Ascending aorta (tissue), 2 donors: ENCODE measurements at regions of chr2 and their contacts with region 1.

Region 1: GRCh38 chr2:36355151-36355889 is at the start of gene CRIM1:
- DNase-seq: peak; percentile 47 to 92
- H3K4me3 ChIP-seq: peak within 1 kb of the TSS; percentile 81
- H3K27ac ChIP-seq: peak within 1 kb of the TSS; percentile 94 to 97
- H3K4me1 ChIP-seq: peaks cover 2 to 18% of the 10 kb centered on the region in 2 donors
- H3K27me3 ChIP-seq: no peaks in the 10 kb centered on the region
- CTCF ChIP-seq: no peak
- total RNA-seq, gene CRIM1: 273 TPM

Region 2: GRCh38 chr2:36294290-36294689 is 61.0 kb before region 1 on chr2:
- intact Hi-C with region 1: no loop called
- DNase-seq: no peak
- H3K4me3 ChIP-seq: no peak overlapping the region
- H3K27ac ChIP-seq: no peak overlapping the region
- H3K4me1 ChIP-seq: no peaks in the 10 kb centered on the region
- H3K27me3 ChIP-seq: no peaks in the 10 kb centered on the region
- CTCF ChIP-seq: no peak

Region 3: GRCh38 chr2:36373149-36373926 is 18.0 kb after region 1 on chr2:
- intact Hi-C with region 1: loop called (anchors 2 kb)
- DNase-seq: no peak
- H3K4me3 ChIP-seq: peak overlapping the region in 1 of 2 donors; percentile 3
- H3K27ac ChIP-seq: peak overlapping the region; percentile 47 to 68
- H3K4me1 ChIP-seq: peaks cover 22 to 78% of the 10 kb centered on the region in 2 donors
- H3K27me3 ChIP-seq: no peaks in the 10 kb centered on the region
- CTCF ChIP-seq: no peak

Region 4: DNA sequence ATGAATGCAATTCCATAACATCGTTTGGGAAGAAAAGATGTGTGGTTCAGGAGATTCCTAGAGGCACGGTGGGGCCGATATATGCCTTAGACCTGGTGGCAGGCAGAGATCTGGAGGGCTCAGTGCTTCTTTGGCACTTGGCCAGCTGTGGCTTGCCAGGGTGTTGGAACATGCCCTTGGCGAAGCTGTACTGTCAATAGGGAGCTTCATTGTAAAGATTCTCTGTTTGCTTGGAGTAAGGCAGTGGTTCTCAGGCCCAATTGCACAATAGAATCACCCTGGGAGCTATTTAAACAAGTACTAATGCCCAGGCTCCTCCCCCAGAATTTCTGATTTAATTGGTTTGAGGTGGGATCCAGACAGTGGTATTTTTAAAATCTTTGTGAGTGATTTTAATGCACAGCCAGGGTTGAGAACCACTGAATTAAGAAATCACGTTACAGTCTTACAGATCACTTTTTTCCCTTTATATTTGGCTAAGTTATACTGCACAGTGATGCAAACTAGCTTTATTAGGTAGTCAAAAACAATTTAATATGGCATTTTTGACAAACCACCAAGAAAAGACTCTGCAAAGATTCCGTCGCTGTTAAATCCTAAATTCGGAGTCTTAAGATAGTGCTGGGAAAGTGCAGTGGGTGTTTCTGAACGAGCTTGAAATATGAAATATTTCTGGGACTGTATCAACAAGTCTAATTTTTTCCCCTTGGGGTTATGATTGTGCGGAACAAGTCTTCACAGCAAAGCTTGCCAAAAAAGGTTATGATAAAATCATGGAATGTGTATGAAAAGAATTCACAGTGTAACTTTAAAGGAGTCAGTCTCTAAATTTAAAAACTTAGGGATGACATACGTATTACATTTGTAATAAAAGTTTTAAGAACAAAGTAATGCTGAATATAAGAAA is 78.2 kb after region 1 on chr2:
- intact Hi-C with region 1: loop called (anchors 5 kb)
- DNase-seq: peak in 1 of 2 donors; percentile 83
- H3K4me3 ChIP-seq: peak overlapping the region in 1 of 2 donors; percentile 37
- H3K27ac ChIP-seq: peak overlapping the region; percentile 85 to 86
- H3K4me1 ChIP-seq: peaks cover 15 to 75% of the 10 kb centered on the region in 2 donors
- H3K27me3 ChIP-seq: no peaks in the 10 kb centered on the region
- CTCF ChIP-seq: no peak

Region 5: GRCh38 chr2:36478332-36478738 is 123.0 kb after region 1 on chr2:
- intact Hi-C with region 1: loop called (anchors 1 kb)
- DNase-seq: peak in 1 of 2 donors; percentile 82
- H3K4me3 ChIP-seq: no peak overlapping the region
- H3K27ac ChIP-seq: peak overlapping the region; percentile 68 to 70
- H3K4me1 ChIP-seq: peaks cover 3 to 39% of the 10 kb centered on the region in 2 donors
- H3K27me3 ChIP-seq: no peaks in the 10 kb centered on the region
- CTCF ChIP-seq: no peak

Region 6: GRCh38 chr2:36489293-36489692 is 134.0 kb after region 1 on chr2:
- intact Hi-C with region 1: no loop called
- DNase-seq: no peak
- H3K4me3 ChIP-seq: no peak overlapping the region
- H3K27ac ChIP-seq: peak overlapping the region; percentile 78 to 81
- H3K4me1 ChIP-seq: peaks cover 17 to 70% of the 10 kb centered on the region in 2 donors
- H3K27me3 ChIP-seq: no peaks in the 10 kb centered on the region
- CTCF ChIP-seq: no peak

Region 7: GRCh38 chr2:36597532-36598377 is 242.4 kb after region 1 on chr2 and contains the start of gene FEZ2:
- intact Hi-C with region 1: loop called (anchors 2 kb)
- DNase-seq: peak in 1 of 2 donors; percentile 81
- H3K4me3 ChIP-seq: peak within 1 kb of the TSS; percentile 99 to 100
- H3K27ac ChIP-seq: peak within 1 kb of the TSS; percentile 96 to 97
- H3K4me1 ChIP-seq: peaks cover 5 to 20% of the 10 kb centered on the region in 2 donors
- H3K27me3 ChIP-seq: no peaks in the 10 kb centered on the region
- CTCF ChIP-seq: no peak
- total RNA-seq, gene FEZ2: 31.8 TPM

Region 8: GRCh38 chr2:36785179-36785795 is 430.0 kb after region 1 on chr2:
- intact Hi-C with region 1: loop called (anchors 5 kb)
- DNase-seq: peak in 1 of 2 donors; percentile 69
- H3K4me3 ChIP-seq: no peak overlapping the region
- H3K27ac ChIP-seq: no peak overlapping the region
- H3K4me1 ChIP-seq: no peaks in the 10 kb centered on the region
- H3K27me3 ChIP-seq: no peaks in the 10 kb centered on the region
- CTCF ChIP-seq: peak; percentile 58 to 94 (median 88)